ENCODE measurements at regions of chr3 and their contacts with region 1.

Region 1: GRCh38 chr3:182618085-182618732 is 175.1 kb upstream of the ATP11B start:
- DNase-seq: no peak
- ATAC-seq: peak; percentile 62
- H3K4me3 Mint-ChIP-seq: no peak overlapping the region
- H3K27ac Mint-ChIP-seq: no peak overlapping the region
- H3K4me1 Mint-ChIP-seq: peaks cover 41% of the 10 kb centered on the region
- H3K27me3 Mint-ChIP-seq: no peaks in the 10 kb centered on the region
- CTCF ChIP-seq: no peak

Region 2: GRCh38 chr3:182349051-182349450 is 269.2 kb before region 1 on chr3:
- CTCF ChIA-PET with region 1: no interaction called
- POLR2A ChIA-PET with region 1: no interaction called
- DNase-seq: no peak
- ATAC-seq: no peak
- H3K4me3 Mint-ChIP-seq: no peak overlapping the region
- H3K27ac Mint-ChIP-seq: no peak overlapping the region
- H3K4me1 Mint-ChIP-seq: peaks cover 4% of the 10 kb centered on the region; the same call in 1 of the 2 replicates
- H3K27me3 Mint-ChIP-seq: no peaks in the 10 kb centered on the region
- CTCF ChIP-seq: no peak

Region 3: GRCh38 chr3:182392182-182392937 is 225.8 kb before region 1 on chr3:
- CTCF ChIA-PET with region 1: interaction called, 13 read pairs
- POLR2A ChIA-PET with region 1: no interaction called
- DNase-seq: no peak
- ATAC-seq: peak; percentile 74
- H3K4me3 Mint-ChIP-seq: no peak overlapping the region
- H3K27ac Mint-ChIP-seq: peak overlapping the region; percentile 13; the same call in 1 of the 2 replicates
- H3K4me1 Mint-ChIP-seq: peaks cover 27% of the 10 kb centered on the region
- H3K27me3 Mint-ChIP-seq: peaks cover under 1% of the 10 kb centered on the region
- CTCF ChIP-seq: no peak

Region 4: DNA sequence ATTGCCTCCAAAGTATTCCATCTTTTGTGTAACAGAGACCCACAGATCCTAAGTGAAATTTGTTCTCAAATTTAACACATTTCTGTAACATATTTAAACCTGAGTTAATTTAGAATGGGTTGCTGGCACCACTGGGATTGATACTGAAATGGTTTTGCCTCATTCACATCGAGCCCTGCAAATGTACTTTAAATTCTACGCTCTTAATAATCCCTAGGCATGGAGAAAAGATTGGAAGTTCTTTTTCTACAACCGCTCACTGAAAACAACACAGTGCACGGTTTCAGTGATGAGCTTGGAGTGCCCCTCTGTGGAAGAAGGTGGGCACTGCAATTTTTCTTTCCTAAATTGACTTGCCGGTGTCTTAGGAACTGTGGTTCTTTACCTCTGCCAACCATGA is 65.2 kb after region 1 on chr3:
- CTCF ChIA-PET with region 1: interaction called, 20 read pairs
- POLR2A ChIA-PET with region 1: no interaction called
- DNase-seq: peak; percentile 69
- ATAC-seq: peak; percentile 70
- H3K4me3 Mint-ChIP-seq: peak overlapping the region; percentile 79
- H3K27ac Mint-ChIP-seq: no peak overlapping the region
- H3K4me1 Mint-ChIP-seq: peaks cover 11% of the 10 kb centered on the region
- H3K27me3 Mint-ChIP-seq: no peaks in the 10 kb centered on the region
- CTCF ChIP-seq: peak; percentile 79

Region 5: DNA sequence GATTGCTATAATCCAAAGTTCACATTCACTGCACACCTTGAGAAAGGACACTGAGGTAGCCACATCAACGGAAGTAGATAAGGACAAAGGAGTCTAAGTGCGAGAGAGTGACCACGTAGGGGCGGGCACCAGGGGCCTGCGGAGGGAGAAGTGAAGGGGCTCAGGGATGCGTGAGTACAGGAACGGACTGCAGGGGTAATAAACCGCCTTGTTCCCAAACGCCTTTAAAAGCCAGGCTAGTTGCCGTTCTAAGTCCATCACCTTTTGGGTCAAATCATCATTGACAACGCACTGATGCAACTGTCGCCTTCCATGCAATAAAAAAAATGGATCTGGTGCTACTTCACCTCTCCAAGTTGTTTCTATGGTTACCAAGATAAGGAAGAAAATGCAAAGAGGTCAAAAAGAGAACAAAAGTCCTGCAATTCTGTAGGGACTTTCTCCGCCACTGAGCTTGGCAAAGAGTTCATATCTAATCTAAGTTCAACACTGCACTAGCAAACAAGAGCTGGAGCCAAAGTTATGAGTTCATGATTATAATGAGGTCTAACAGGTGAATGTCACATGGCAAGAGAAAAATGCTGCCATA is 142.5 kb after region 1 on chr3:
- CTCF ChIA-PET with region 1: no interaction called
- POLR2A ChIA-PET with region 1: no interaction called
- DNase-seq: no peak
- ATAC-seq: no peak
- H3K4me3 Mint-ChIP-seq: no peak overlapping the region
- H3K27ac Mint-ChIP-seq: no peak overlapping the region
- H3K4me1 Mint-ChIP-seq: no peaks in the 10 kb centered on the region
- H3K27me3 Mint-ChIP-seq: no peaks in the 10 kb centered on the region; the same call in 1 of the 2 replicates
- CTCF ChIP-seq: no peak